Activated CD4-positive, alpha-beta T cell treated with anti-CD3 and anti-CD28 coated beads for 36 hours (primary cell): ENCODE measurements at regions of chr6 and their contacts with region 1.

Region 1: DNA sequence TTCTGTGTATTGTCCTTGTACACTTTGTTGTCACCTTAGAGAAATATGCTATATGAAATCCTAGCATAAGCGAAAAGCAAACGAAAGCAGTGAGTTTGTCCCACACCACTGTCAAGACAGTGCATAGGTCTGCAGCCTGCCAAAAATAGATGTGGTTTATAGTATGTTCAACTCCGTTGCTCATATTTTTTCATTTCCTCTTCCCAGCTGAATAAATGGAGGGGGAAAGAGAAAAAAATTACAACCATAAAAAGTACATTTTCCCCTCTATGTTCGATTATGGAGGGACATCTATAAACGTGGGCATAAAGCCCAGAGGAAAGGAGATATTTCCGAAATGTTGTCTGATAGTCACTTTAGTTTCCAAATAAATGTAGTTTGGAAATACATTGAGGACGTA is 25.8 kb downstream of the PRL start:
- DNase-seq: no peak
- ATAC-seq: no peak
- H3K4me3 Mint-ChIP-seq: no peak overlapping the region
- H3K27ac Mint-ChIP-seq: no peak overlapping the region
- H3K4me1 Mint-ChIP-seq: no peaks in the 10 kb centered on the region
- H3K27me3 Mint-ChIP-seq: no peaks in the 10 kb centered on the region

Region 2: DNA sequence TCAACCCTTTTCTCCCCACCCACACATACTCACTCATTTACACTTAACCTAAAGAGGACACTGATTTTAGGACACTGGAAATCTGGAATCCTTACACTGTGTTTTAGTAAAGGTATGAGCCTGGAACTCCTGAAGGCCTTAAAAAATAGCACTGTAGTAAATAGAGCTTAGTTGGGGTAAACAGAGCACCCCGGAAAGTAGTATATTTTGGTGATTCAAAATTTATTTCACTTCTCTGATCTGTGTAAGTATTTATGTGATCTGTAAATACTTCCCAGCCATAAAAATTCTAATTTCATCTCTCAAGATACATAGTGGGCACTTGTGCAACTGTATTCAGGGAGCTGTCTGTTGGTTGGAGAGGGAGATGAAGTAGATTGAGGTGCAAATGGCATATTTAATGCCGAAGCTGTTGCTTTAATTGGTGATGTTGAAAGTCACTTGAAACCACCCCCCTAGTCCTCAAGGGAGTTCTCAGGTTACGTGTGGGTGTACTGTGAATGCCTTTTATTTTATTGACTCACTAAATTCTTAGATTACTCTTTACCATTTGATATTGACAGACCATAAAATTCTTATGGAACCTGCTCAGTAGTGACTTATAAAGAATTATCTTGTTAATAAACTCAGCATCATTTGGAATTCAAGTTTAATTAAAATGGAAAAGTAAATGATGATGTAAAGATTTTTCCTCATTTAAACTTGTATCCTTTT is 522.6 kb before region 1 on chr6:
- CTCF ChIA-PET with region 1: no interaction called
- POLR2A ChIA-PET with region 1: no interaction called
- intact Hi-C with region 1: no loop called
- DNase-seq: no peak
- ATAC-seq: no peak
- H3K4me3 Mint-ChIP-seq: no peak overlapping the region
- H3K27ac Mint-ChIP-seq: no peak overlapping the region
- H3K4me1 Mint-ChIP-seq: peaks cover 8% of the 10 kb centered on the region
- H3K27me3 Mint-ChIP-seq: peaks cover 4% of the 10 kb centered on the region

Region 3: DNA sequence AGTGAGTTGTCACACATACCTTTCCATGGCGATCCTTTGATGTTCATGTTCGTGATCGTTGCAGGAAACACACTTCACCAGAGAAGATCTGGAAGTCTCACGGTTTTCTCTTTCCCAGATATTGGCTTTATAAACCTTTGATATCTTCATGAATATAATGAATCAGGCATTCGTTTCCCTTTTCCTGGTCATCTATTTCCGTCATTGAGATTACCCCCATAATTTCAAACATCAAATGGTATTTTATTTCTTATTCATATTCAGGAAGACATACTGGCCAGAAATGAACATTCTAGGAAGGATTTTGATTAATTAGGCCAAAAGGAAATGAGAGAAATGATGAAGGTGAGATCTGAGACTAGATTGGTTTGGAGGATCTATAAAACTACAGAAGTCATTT is 25.9 kb after region 1 on chr6 and contains the start of gene PRL:
- CTCF ChIA-PET with region 1: no interaction called
- POLR2A ChIA-PET with region 1: no interaction called
- intact Hi-C with region 1: loop called in 1 of 2 experiments (anchors 1 kb)
- DNase-seq: no peak
- ATAC-seq: no peak
- H3K4me3 Mint-ChIP-seq: no peak within 1 kb of the TSS
- H3K27ac Mint-ChIP-seq: no peak within 1 kb of the TSS
- H3K4me1 Mint-ChIP-seq: no peaks in the 10 kb centered on the region
- H3K27me3 Mint-ChIP-seq: no peaks in the 10 kb centered on the region
- total RNA-seq, gene PRL: not detected